CD4-positive, alpha-beta T cell (primary cell): ENCODE measurements at regions of chr15 and their contacts with region 1.

Region 1: GRCh38 chr15:50876989-50877360 is 31.5 kb upstream of the AP4E1 start:
- DNase-seq: peak; percentile 36 to 86 (median 52)
- ATAC-seq: peak; percentile 67
- H3K4me3 ChIP-seq: peak overlapping the region; percentile 26
- H3K4me3 Mint-ChIP-seq: peak overlapping the region; percentile 44
- H3K27ac ChIP-seq: no peak overlapping the region
- H3K27ac Mint-ChIP-seq: no peak overlapping the region
- H3K4me1 ChIP-seq: peaks cover 21% of the 10 kb centered on the region
- H3K4me1 Mint-ChIP-seq: peaks cover 14% of the 10 kb centered on the region
- H3K27me3 ChIP-seq: no peaks in the 10 kb centered on the region
- H3K27me3 Mint-ChIP-seq: no peaks in the 10 kb centered on the region
- CTCF ChIP-seq: peak; percentile 99

Region 2: DNA sequence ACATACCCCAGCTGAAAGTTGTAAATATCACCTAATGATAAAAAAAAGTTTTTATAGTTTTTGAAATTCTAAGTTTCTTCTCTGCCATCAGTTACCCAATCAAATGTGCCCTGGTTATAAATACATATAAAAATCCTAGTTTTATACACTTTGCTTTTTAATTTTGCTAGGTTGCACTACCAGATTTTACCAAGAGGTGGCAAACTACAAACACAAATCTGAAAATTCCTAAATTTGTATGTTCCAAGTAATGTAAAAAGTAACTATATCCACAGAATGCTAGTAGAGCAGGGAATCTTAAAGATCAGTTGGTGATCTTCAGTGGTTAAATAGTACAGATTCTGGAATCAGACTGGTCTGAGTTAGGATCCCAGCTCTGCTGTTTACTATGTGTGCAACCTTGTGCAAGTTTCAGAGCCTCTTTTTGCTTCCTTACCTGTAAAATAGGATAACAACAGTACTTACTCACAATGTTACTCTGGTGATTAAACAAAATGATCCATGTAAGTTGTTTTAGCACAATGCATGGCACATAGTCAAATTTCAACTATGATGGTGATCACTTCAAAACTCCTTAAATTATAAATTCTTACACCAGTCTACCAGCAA is 201.3 kb before region 1 on chr15:
- CTCF ChIA-PET with region 1: interaction called, 4 read pairs
- POLR2A ChIA-PET with region 1: interaction called, 4 read pairs
- intact Hi-C with region 1: loop called (anchors 1 kb)
- DNase-seq: peak in 3 of 14 experiments; percentile 49 to 60 (median 53)
- ATAC-seq: peak; percentile 43
- H3K4me3 ChIP-seq: no peak overlapping the region
- H3K4me3 Mint-ChIP-seq: no peak overlapping the region
- H3K27ac ChIP-seq: no peak overlapping the region
- H3K27ac Mint-ChIP-seq: peak overlapping the region; percentile 59
- H3K4me1 ChIP-seq: peaks cover 21% of the 10 kb centered on the region
- H3K4me1 Mint-ChIP-seq: peaks cover 22% of the 10 kb centered on the region
- H3K27me3 ChIP-seq: no peaks in the 10 kb centered on the region
- H3K27me3 Mint-ChIP-seq: no peaks in the 10 kb centered on the region
- CTCF ChIP-seq: peak; percentile 93

Region 3: DNA sequence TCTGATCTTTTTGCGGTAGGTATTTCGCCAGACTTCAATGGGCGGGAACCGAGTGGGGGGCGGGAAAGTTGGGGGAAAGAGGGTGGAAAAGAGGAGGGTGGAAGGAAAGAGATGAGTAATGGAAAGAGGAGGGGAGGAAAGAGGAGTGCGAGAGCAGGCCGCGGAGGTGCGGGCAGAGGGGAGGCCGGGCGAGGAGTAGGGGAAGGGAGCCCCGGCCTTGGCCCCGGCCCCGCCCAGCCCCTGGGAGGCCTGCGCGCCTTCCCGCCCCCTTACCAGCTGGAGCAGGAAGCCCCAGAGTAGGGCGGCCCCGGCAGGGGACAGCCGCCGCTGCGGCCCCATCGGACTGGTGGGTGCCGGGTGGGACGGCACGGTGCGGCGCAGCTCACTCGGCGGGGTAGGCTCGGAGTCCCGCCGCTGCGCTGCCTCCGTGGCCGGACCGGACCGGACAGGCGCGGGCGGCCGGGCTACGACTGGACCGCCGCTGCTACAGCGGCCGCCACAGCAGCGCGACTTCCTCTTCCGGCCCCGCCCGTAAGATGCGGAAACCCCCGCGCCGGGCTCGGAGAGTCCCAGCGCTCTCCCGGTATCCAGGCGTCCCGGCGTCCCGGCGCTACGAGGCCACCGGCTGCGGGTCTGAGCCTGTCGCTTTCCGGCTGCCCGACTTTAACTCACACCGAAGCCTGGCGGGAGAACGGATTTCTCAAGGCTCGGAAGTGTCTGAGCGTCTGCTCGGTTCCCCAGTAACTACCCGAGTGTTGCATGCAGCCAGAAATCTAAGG is 111.6 kb before region 1 on chr15 and contains the start of gene SPPL2A:
- CTCF ChIA-PET with region 1: no interaction called
- POLR2A ChIA-PET with region 1: no interaction called
- intact Hi-C with region 1: loop called in 1 of 2 experiments (anchors 5 kb)
- DNase-seq: peak; percentile 47 to 88 (median 69)
- ATAC-seq: peak; percentile 89
- H3K4me3 ChIP-seq: peak within 1 kb of the TSS; percentile 72
- H3K4me3 Mint-ChIP-seq: peak within 1 kb of the TSS; percentile 94
- H3K27ac ChIP-seq: peak within 1 kb of the TSS; percentile 82 to 88
- H3K27ac Mint-ChIP-seq: peak within 1 kb of the TSS; percentile 84
- H3K4me1 ChIP-seq: peaks cover 25% of the 10 kb centered on the region
- H3K4me1 Mint-ChIP-seq: peaks cover 44% of the 10 kb centered on the region
- H3K27me3 ChIP-seq: no peaks in the 10 kb centered on the region
- H3K27me3 Mint-ChIP-seq: no peaks in the 10 kb centered on the region
- CTCF ChIP-seq: no peak
- total RNA-seq, gene SPPL2A: 26.6 to 30.7 TPM

Region 4: GRCh38 chr15:50968353-50968752 is 91.4 kb after region 1 on chr15:
- CTCF ChIA-PET with region 1: no interaction called
- POLR2A ChIA-PET with region 1: no interaction called
- intact Hi-C with region 1: no loop called
- DNase-seq: no peak
- ATAC-seq: no peak
- H3K4me3 ChIP-seq: no peak overlapping the region
- H3K4me3 Mint-ChIP-seq: no peak overlapping the region
- H3K27ac ChIP-seq: no peak overlapping the region
- H3K27ac Mint-ChIP-seq: no peak overlapping the region
- H3K4me1 ChIP-seq: no peaks in the 10 kb centered on the region
- H3K4me1 Mint-ChIP-seq: no peaks in the 10 kb centered on the region
- H3K27me3 ChIP-seq: no peaks in the 10 kb centered on the region
- H3K27me3 Mint-ChIP-seq: no peaks in the 10 kb centered on the region
- CTCF ChIP-seq: no peak